Colonic mucosa (tissue), 4 donors: ENCODE measurements at regions of chr10 and their contacts with region 1.

Region 1: GRCh38 chr10:59865101-59865500 is 41.3 kb downstream of the CCDC6 start:
- DNase-seq: peak; percentile 74
- H3K4me3 ChIP-seq: no peak overlapping the region
- H3K27ac ChIP-seq: peak overlapping the region; percentile 43
- H3K4me1 ChIP-seq: no peaks in the 10 kb centered on the region
- H3K27me3 ChIP-seq: no peaks in the 10 kb centered on the region
- CTCF ChIP-seq: peak; percentile 33

Region 2: GRCh38 chr10:59719374-59719773 is 145.7 kb before region 1 on chr10:
- intact Hi-C with region 1: no loop called
- DNase-seq: no peak
- H3K4me3 ChIP-seq: no peak overlapping the region
- H3K27ac ChIP-seq: no peak overlapping the region
- H3K4me1 ChIP-seq: no peaks in the 10 kb centered on the region
- H3K27me3 ChIP-seq: no peaks in the 10 kb centered on the region
- CTCF ChIP-seq: no peak

Region 3: GRCh38 chr10:59906417-59907202 is 41.5 kb after region 1 on chr10 and contains the start of gene CCDC6:
- intact Hi-C with region 1: loop called (anchors 5 kb)
- DNase-seq: peak; percentile 95
- H3K4me3 ChIP-seq: peak within 1 kb of the TSS; percentile 85
- H3K27ac ChIP-seq: peak within 1 kb of the TSS; percentile 93
- H3K4me1 ChIP-seq: peaks cover 4% of the 10 kb centered on the region
- H3K27me3 ChIP-seq: no peaks in the 10 kb centered on the region
- CTCF ChIP-seq: peak; percentile 78
- total RNA-seq, gene CCDC6: 65.8 to 91.0 TPM